Activated naive CD4-positive, alpha-beta T cell treated with anti-CD3 and anti-CD28 coated beads, Interleukin-2, amount 10 ng/mL, durations not matched to agents 7 days and 5 days (primary cell): ENCODE measurements at regions of chr1 and their contacts with region 1.

Region 1: GRCh38 chr1:107430540-107431228 is 289.8 kb downstream of the NTNG1 start:
- DNase-seq: peak; percentile 24
- H3K4me3 Mint-ChIP-seq: no peak overlapping the region
- H3K27ac Mint-ChIP-seq: no peak overlapping the region
- H3K4me1 Mint-ChIP-seq: no peaks in the 10 kb centered on the region
- H3K27me3 Mint-ChIP-seq: no peaks in the 10 kb centered on the region

Region 2: GRCh38 chr1:107529502-107530149 is 98.9 kb after region 1 on chr1:
- CTCF ChIA-PET with region 1: interaction called, 23 read pairs
- DNase-seq: peak; percentile 21
- H3K4me3 Mint-ChIP-seq: no peak overlapping the region
- H3K27ac Mint-ChIP-seq: no peak overlapping the region
- H3K4me1 Mint-ChIP-seq: no peaks in the 10 kb centered on the region
- H3K27me3 Mint-ChIP-seq: no peaks in the 10 kb centered on the region

Region 3: GRCh38 chr1:107750358-107750959 is 319.8 kb after region 1 on chr1:
- CTCF ChIA-PET with region 1: interaction called, 28 read pairs
- DNase-seq: peak; percentile 55
- H3K4me3 Mint-ChIP-seq: no peak overlapping the region
- H3K27ac Mint-ChIP-seq: no peak overlapping the region
- H3K4me1 Mint-ChIP-seq: no peaks in the 10 kb centered on the region
- H3K27me3 Mint-ChIP-seq: no peaks in the 10 kb centered on the region